CD8-positive, alpha-beta T cell (primary cell): ENCODE measurements at regions of chr3 and their contacts with region 1.

Region 1: GRCh38 chr3:151183265-151183671 is 19.7 kb downstream of the GPR171 start:
- DNase-seq: peak in 2 of 9 experiments; percentile 25 to 47
- ATAC-seq: peak; percentile 76
- H3K4me3 ChIP-seq: peak overlapping the region in 1 of 2 experiments; percentile 0
- H3K4me3 Mint-ChIP-seq: peak overlapping the region; percentile 68
- H3K27ac ChIP-seq: peak overlapping the region in 1 of 2 experiments; percentile 2
- H3K27ac Mint-ChIP-seq: peak overlapping the region; percentile 77
- H3K4me1 ChIP-seq: peaks cover 14% of the 10 kb centered on the region
- H3K4me1 Mint-ChIP-seq: peaks cover 39% of the 10 kb centered on the region
- H3K27me3 ChIP-seq: no peaks in the 10 kb centered on the region
- H3K27me3 Mint-ChIP-seq: no peaks in the 10 kb centered on the region
- CTCF ChIP-seq: no peak

Region 2: DNA sequence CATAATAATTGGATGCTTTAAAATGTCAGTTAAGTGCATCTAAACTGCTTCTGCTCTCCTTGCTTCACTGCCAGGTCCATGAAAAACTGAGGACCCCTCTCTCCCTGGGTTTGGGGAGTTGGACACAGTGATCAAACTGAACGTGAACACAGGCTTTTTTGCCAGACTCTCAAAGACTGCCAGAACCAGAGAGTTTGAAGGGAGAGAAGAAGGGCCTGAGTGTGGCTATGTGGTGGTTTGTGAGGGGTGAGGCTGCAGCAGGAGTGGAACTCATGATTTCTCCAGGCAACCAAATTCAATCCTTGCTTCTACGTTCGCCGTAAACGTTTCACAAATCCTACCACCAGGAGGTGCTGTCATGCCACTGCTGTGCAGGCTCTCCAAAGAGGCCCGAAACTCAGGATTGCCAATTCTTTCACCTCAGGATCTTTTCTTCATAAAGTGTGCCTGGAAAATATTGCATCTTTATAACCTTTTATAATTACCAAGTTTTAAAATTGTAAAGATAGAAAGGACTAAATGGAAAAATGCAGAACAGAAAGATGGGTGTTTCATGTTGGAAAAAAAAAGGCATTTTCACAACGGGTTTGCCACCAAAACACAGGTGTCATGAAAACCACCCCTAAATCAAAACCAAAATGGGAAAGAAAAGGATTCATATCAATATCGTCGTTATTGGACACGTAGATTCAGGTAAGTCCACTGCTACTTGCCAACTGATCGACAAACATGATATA is 1689.1 kb before region 1 on chr3:
- CTCF ChIA-PET with region 1: no interaction called
- POLR2A ChIA-PET with region 1: no interaction called
- intact Hi-C with region 1: loop called in 1 of 2 experiments (anchors 5 kb)
- DNase-seq: peak in 4 of 9 experiments; percentile 7 to 49 (median 30)
- ATAC-seq: no peak
- H3K4me3 ChIP-seq: no peak overlapping the region
- H3K4me3 Mint-ChIP-seq: no peak overlapping the region
- H3K27ac ChIP-seq: no peak overlapping the region
- H3K27ac Mint-ChIP-seq: no peak overlapping the region
- H3K4me1 ChIP-seq: no peaks in the 10 kb centered on the region
- H3K4me1 Mint-ChIP-seq: no peaks in the 10 kb centered on the region
- H3K27me3 ChIP-seq: peaks cover 0 to 3% of the 10 kb centered on the region in 2 experiments
- H3K27me3 Mint-ChIP-seq: peaks cover 22% of the 10 kb centered on the region
- CTCF ChIP-seq: no peak

Region 3: GRCh38 chr3:150925751-150926201 is 257.5 kb before region 1 on chr3:
- CTCF ChIA-PET with region 1: no interaction called
- POLR2A ChIA-PET with region 1: no interaction called
- intact Hi-C with region 1: no loop called
- DNase-seq: peak; percentile 8 to 63 (median 51)
- ATAC-seq: peak; percentile 81
- H3K4me3 ChIP-seq: no peak overlapping the region
- H3K4me3 Mint-ChIP-seq: peak overlapping the region; percentile 55
- H3K27ac ChIP-seq: no peak overlapping the region
- H3K27ac Mint-ChIP-seq: no peak overlapping the region
- H3K4me1 ChIP-seq: no peaks in the 10 kb centered on the region
- H3K4me1 Mint-ChIP-seq: peaks cover 6% of the 10 kb centered on the region
- H3K27me3 ChIP-seq: no peaks in the 10 kb centered on the region
- H3K27me3 Mint-ChIP-seq: peaks cover 14% of the 10 kb centered on the region
- CTCF ChIP-seq: peak; percentile 60

Region 4: DNA sequence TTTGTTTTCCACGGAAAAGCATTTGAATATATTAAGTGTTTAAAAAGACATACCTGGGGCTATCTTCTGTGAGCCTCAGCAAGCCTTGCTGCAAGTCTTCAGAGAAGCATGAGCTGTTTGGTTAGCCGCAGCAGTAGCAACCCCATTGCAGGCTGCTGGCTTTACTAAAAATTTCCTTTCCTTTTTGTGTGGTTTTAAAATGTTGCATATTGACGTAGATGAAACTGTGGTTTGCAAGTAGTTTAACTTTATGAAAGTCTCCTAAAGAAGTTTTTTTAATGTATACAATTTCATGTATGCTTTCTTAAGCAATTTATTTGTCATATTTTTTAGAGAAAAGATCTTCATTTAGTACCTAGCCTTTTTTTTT is 19.8 kb after region 1 on chr3 and contains the start of gene GPR171:
- CTCF ChIA-PET with region 1: interaction called, 3 read pairs
- POLR2A ChIA-PET with region 1: interaction called, 28 read pairs
- intact Hi-C with region 1: loop called in 1 of 2 experiments (anchors 2 kb)
- DNase-seq: peak; percentile 46 to 91 (median 68)
- ATAC-seq: peak; percentile 84
- H3K4me3 ChIP-seq: peak within 1 kb of the TSS; percentile 50 to 59
- H3K4me3 Mint-ChIP-seq: peak within 1 kb of the TSS; percentile 76
- H3K27ac ChIP-seq: peak within 1 kb of the TSS; percentile 36 to 72
- H3K27ac Mint-ChIP-seq: peak within 1 kb of the TSS; percentile 91
- H3K4me1 ChIP-seq: peaks cover 67% of the 10 kb centered on the region
- H3K4me1 Mint-ChIP-seq: peaks cover 81% of the 10 kb centered on the region
- H3K27me3 ChIP-seq: no peaks in the 10 kb centered on the region
- H3K27me3 Mint-ChIP-seq: no peaks in the 10 kb centered on the region
- CTCF ChIP-seq: no peak
- total RNA-seq, gene GPR171: 11.5 to 13.4 TPM